Caco-2 (cell line): ENCODE measurements at regions of chr2 and their contacts with region 1.

Region 1: GRCh38 chr2:54081574-54081973 is 33.8 kb upstream of the ACYP2 start:
- DNase-seq: no peak
- H3K4me3 ChIP-seq: no peak overlapping the region
- H3K4me3 Mint-ChIP-seq: no peak overlapping the region
- H3K27ac Mint-ChIP-seq: no peak overlapping the region
- H3K4me1 ChIP-seq: no peaks in the 10 kb centered on the region
- H3K4me1 Mint-ChIP-seq: no peaks in the 10 kb centered on the region
- H3K27me3 ChIP-seq: 0 out of 2 replicates have a peak, but pooled peaks cover 1% of the 10 kb centered on the region
- H3K27me3 Mint-ChIP-seq: peaks cover 2% of the 10 kb centered on the region
- CTCF ChIP-seq: no peak

Region 2: DNA sequence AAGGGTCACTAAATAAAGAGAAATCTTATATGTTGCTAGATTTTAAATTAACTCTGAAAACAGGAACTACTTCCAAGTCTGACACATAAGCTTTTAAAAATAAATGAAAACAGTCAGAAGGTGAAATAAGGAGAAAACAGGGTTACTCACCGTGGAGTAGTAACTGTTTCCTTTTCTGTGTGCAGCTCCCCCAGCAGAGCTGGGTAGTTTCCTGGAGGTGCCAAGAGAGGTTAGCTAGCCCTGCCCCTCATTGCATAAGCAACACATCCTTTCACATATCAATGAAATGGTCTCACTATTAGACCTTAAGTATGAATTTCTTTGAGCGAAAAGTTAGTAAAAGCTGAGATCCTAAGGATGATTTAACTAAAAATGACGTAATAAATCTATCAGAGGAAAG is 167.9 kb before region 1 on chr2:
- CTCF ChIA-PET with region 1: no interaction called
- POLR2A ChIA-PET with region 1: no interaction called
- intact Hi-C with region 1: loop called (anchors 5 kb)
- DNase-seq: no peak
- H3K4me3 ChIP-seq: no peak overlapping the region
- H3K4me3 Mint-ChIP-seq: no peak overlapping the region
- H3K27ac Mint-ChIP-seq: no peak overlapping the region
- H3K4me1 ChIP-seq: no peaks in the 10 kb centered on the region
- H3K4me1 Mint-ChIP-seq: no peaks in the 10 kb centered on the region
- H3K27me3 ChIP-seq: no peaks in the 10 kb centered on the region
- H3K27me3 Mint-ChIP-seq: no peaks in the 10 kb centered on the region
- CTCF ChIP-seq: no peak

Region 3: GRCh38 chr2:53970724-53971602 is 110.6 kb before region 1 on chr2 and contains the start of gene PSME4:
- CTCF ChIA-PET with region 1: no interaction called
- POLR2A ChIA-PET with region 1: no interaction called
- intact Hi-C with region 1: loop called (anchors 10 kb)
- DNase-seq: peak; percentile 95 to 97
- H3K4me3 ChIP-seq: peak within 1 kb of the TSS; percentile 80
- H3K4me3 Mint-ChIP-seq: peak within 1 kb of the TSS; percentile 91
- H3K27ac Mint-ChIP-seq: peak within 1 kb of the TSS; percentile 97
- H3K4me1 ChIP-seq: peaks cover 21% of the 10 kb centered on the region
- H3K4me1 Mint-ChIP-seq: peaks cover 42% of the 10 kb centered on the region
- H3K27me3 ChIP-seq: no peaks in the 10 kb centered on the region
- H3K27me3 Mint-ChIP-seq: no peaks in the 10 kb centered on the region
- CTCF ChIP-seq: no peak
- total RNA-seq, gene PSME4: 79.0 and 84.9 TPM in 2 replicates

Region 4: DNA sequence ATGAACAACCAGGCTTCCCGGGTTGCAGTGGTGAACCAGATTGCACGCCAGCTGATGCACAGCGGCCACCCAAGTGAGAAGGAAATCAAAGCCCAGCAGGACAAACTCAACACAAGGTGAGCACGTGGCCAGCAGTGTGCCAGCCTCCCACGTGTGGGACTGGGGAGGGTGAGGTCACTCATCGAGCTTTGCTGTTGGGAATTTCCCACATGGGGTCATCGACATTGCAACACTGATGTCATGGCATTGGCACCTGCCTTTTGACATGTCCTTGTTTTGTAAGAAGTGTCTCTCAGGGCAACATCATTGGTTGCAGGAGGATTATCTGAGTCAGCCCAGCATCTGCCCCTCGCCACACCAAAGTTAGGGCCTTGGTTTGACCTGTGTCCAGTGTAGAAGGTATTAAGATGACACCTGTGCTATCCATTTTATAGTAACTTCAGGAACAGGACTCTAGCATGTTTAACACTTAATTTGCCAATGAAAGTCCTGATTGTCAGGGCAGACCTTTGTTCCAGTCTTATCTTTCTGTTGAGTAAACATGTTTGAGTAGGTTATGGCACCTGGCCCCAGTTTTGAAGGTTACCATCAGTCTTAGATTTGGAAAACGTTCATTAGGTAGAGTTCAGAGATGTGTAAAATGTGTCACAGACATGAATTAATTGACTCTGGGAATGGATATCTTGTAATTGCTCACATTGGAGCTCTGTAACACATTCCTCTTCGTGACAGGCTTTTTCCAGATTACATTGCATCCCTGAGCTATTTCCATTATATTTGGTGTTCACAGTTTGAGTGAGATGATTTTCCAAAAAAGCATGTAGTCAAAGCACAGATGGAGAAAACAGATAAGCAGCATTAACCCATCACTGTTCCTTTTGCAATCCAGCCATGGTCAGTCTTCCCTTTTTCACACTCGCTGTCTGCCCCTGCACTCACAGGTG is 548.6 kb after region 1 on chr2:
- CTCF ChIA-PET with region 1: no interaction called
- POLR2A ChIA-PET with region 1: no interaction called
- intact Hi-C with region 1: no loop called
- DNase-seq: peak; percentile 47 to 60
- H3K4me3 ChIP-seq: no peak overlapping the region
- H3K4me3 Mint-ChIP-seq: no peak overlapping the region
- H3K27ac Mint-ChIP-seq: peak overlapping the region; percentile 61
- H3K4me1 ChIP-seq: peaks cover 13% of the 10 kb centered on the region
- H3K4me1 Mint-ChIP-seq: peaks cover 29% of the 10 kb centered on the region
- H3K27me3 ChIP-seq: no peaks in the 10 kb centered on the region
- H3K27me3 Mint-ChIP-seq: no peaks in the 10 kb centered on the region
- CTCF ChIP-seq: no peak